ENCODE measurements at regions of chr3 and their contacts with region 1.

Region 1: GRCh38 chr3:52238761-52239701 is at the start of gene TWF2:
- DNase-seq: no peak
- ATAC-seq: peak; percentile 88
- H3K4me3 ChIP-seq: peak within 1 kb of the TSS; percentile 80 to 86
- H3K27ac ChIP-seq: peak within 1 kb of the TSS; percentile 83
- H3K4me1 ChIP-seq: peaks cover 25% of the 10 kb centered on the region
- H3K27me3 ChIP-seq: no peaks in the 10 kb centered on the region
- CTCF ChIP-seq: no peak
- total RNA-seq, gene TWF2: 51.9 TPM

Region 2: DNA sequence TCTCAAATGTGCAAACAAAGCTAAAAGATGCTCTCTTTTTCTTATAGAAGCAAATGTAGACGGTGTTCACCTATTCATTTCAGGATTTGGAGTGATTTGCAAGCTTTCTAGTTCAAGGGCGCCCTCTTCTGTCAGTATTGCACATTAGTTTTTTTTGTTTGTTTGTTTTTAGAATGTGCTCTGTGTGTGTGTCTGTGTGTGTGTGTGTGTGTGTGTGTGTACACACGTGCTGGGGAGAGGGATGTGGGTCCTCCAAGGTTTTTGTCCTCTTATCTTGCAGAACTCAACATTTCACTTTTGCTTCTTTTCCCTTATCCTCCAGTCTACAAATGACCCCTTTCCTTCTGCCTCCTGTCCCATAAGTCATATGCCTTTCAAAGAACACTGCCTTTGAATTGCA is 100.6 kb after region 1 on chr3:
- CTCF ChIA-PET with region 1: no interaction called
- POLR2A ChIA-PET with region 1: no interaction called
- in situ Hi-C with region 1: no loop called
- intact Hi-C with region 1: loop called (anchors 10 kb)
- DNase-seq: peak; percentile 45
- ATAC-seq: peak; percentile 56
- H3K4me3 ChIP-seq: no peak overlapping the region
- H3K27ac ChIP-seq: no peak overlapping the region
- H3K4me1 ChIP-seq: no peaks in the 10 kb centered on the region
- H3K27me3 ChIP-seq: no peaks in the 10 kb centered on the region
- CTCF ChIP-seq: peak; percentile 73

Measured in Panc1 (cell line).